ENCODE measurements at regions of chr14 and their contacts with region 1.

Region 1: GRCh38 chr14:95345032-95345431 is 25.3 kb upstream of the CLMN start:
- DNase-seq: no peak
- H3K4me3 ChIP-seq: no peak overlapping the region
- H3K27ac ChIP-seq: no peak overlapping the region
- H3K4me1 ChIP-seq: no peaks in the 10 kb centered on the region
- H3K27me3 ChIP-seq: no peaks in the 10 kb centered on the region
- CTCF ChIP-seq: no peak
- EP300 ChIP-seq: no peak
- POLR2A ChIP-seq: no peak

Region 2: DNA sequence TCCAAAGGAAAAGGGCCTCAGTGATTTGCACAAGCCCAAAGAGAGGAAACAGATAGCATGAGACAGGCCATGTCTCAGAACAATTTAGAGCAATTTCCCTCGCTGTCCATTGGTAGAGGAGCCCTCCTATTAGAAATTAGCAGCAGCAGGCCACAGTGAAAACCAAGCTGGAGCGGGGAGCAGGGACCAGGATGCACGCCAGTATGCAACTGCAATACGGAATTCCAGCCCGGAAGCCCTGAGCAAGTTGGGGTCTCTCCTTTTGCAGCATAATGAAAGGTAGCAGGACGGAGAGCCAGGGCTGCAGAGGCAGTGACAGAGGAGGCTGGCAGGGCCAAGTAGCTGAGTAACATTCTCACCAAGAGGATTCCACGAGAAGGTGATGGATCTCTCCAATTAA is 59.6 kb after region 1 on chr14:
- intact Hi-C with region 1: loop called in 1 of 4 experiments (anchors 2 kb)
- DNase-seq: no peak
- H3K4me3 ChIP-seq: no peak overlapping the region
- H3K27ac ChIP-seq: no peak overlapping the region
- H3K4me1 ChIP-seq: no peaks in the 10 kb centered on the region
- H3K27me3 ChIP-seq: no peaks in the 10 kb centered on the region
- CTCF ChIP-seq: no peak
- EP300 ChIP-seq: no peak
- POLR2A ChIP-seq: no peak